ENCODE measurements at regions of chr7 and their contacts with region 1.

Region 1: DNA sequence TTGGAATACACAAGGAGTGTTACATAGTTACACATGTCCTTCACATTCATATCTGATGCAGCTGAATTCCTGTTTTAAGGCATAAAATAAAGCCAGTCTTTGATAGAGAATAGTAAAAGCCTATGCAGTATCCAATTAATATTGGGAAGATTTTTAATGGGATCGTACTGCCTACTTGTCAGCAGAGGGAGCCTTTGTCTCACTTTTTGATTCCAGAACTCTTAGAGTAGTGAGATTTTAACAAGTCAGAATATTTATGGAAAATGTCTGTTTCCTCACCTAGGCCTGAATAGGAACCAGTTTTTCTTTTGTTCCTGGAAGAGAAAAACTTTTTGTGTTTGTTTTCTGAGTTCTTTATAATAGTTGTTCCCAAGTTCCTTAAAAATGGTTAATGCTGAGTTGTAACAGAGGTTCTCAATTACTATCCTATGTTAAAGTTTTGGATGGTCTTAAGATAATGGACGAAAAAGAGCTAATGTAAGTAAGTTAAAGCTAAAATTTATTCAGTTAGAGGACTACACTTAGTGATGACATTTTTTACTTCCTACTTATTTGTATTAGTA is 114.0 kb downstream of the BBS9 start:
- DNase-seq: no peak
- H3K4me3 ChIP-seq: no peak overlapping the region
- CTCF ChIP-seq: peak; percentile 46

Region 2: DNA sequence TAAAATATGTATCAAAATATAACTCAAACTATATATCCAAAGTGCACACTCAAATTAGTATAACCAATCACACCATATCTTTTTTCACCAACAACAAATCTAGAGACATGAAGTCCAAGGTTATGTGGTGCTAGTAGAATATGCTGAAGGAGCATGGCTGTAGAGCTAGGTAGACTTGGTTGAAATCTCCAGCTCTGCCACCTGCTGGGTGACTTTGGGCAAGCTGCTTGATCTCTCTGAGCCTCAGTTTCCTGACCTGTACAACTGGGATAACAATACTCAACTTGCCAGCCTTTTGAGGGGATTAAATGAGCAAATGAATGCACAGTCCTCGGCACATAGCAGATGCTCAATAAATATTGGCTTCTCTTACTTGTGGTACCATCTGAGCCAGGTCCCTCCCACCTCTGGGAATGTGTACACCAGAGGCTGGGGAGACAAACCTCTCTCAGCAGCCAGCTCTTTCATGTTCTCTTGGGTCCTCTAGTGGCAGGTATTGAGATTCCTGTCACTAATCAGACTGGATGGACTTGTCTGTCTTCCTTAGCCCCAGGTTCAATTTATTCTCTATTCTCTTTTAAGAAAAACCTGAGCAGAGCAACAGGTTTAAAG is 1078.9 kb before region 1 on chr7:
- CTCF ChIA-PET with region 1: no interaction called
- POLR2A ChIA-PET with region 1: no interaction called
- DNase-seq: no peak
- H3K4me3 ChIP-seq: no peak overlapping the region
- CTCF ChIP-seq: peak; percentile 60

Region 3: DNA sequence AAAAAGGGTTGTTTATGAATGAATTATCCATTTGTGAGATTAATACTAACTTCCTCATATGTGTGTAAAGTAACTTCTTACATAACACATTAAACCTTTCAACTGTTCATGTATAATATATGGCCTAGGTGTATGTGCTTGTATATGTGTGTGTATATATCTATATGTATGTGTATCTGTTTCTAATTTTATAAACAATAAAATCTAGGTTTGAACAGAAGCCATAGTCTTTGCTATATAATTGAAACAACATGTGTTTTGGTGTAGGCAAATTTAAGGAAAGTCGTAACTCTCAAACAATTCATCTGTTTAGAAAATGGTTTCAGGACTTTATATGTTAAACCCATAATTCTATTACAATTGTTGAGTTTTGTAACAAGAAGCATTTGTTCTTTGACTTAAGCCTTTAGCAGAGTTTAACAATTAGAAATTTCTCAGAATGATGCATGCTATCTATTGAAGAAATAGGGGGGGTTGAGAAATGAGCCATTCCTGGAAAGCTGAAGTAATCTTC is 10.7 kb before region 1 on chr7:
- CTCF ChIA-PET with region 1: interaction called, 10 read pairs
- POLR2A ChIA-PET with region 1: no interaction called
- DNase-seq: no peak
- H3K4me3 ChIP-seq: no peak overlapping the region
- CTCF ChIP-seq: no peak

Region 4: DNA sequence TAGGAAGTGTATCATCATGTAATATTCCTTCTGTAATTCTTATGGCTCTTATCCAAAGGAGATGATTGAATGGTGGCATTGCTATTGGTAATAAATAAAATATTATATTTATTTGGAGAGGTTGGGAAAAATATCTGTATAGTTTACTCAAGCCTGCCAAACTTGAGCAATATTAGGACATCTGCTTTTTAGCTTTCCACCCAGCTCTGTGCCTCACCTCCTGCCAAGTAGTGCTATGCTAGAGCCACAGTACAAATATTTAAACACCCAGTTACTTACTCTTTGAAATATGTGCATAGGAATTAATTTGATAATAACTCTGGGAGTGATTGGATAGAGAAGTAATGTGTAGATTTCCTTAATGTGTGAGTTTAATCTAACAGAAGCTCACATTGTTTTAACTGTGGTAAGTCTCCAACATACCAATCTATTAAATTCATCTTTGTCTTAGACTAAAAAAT is 15.1 kb after region 1 on chr7:
- CTCF ChIA-PET with region 1: interaction called, 18 read pairs
- POLR2A ChIA-PET with region 1: no interaction called
- DNase-seq: peak; percentile 66
- H3K4me3 ChIP-seq: no peak overlapping the region
- CTCF ChIP-seq: no peak

Region 5: DNA sequence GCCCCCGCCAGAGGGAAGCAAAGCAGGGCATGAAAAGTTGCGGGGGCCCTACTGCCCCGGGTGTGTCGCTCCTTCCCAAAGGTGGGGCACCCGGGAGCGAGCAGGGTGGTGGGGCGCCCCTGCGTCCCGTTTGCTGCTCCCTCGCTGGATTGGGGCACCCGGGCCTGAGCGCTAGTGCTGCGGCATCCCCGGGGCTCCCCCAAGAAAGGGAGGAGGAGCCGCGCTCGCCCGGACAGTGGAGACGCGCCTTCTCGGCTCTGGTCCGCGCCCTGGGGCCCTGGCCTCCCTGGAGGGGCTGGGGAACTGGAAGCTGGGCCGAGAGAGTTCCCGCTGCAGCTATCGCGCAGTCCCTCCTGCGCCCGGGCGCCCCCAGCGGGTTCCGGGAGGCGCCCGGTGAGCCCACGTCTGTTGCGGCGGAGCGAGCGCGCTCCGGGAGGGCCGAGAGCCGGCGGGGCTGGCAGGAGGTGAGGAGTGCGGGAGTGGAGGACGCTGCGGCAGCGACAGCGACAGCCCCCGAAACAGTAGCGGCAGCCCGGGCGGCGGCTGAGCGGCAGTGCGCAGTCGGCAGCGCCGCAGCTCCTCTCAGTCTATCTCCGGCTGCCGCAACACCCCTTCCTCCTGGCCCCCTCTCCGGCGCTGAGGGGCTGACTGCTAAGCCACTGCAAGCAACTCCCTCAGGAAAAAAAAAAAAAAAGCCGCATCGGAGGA is 661.4 kb after region 1 on chr7:
- CTCF ChIA-PET with region 1: interaction called, 10 read pairs
- POLR2A ChIA-PET with region 1: no interaction called
- DNase-seq: no peak
- H3K4me3 ChIP-seq: peak overlapping the region; percentile 68
- CTCF ChIP-seq: peak; percentile 47

Measured in AG04449 (cell line).